Endothelial cell of umbilical vein (primary cell): ENCODE measurements at regions of chr7 and their contacts with region 1.

Region 1: GRCh38 chr7:70953331-70953741 is 178.6 kb upstream of the GALNT17 start:
- DNase-seq: no peak
- H3K4me3 ChIP-seq: no peak overlapping the region
- H3K27ac ChIP-seq: no peak overlapping the region
- H3K4me1 ChIP-seq: no peaks in the 10 kb centered on the region
- H3K27me3 ChIP-seq: no peaks in the 10 kb centered on the region
- CTCF ChIP-seq: no peak
- POLR2A ChIP-seq: no peak

Region 2: DNA sequence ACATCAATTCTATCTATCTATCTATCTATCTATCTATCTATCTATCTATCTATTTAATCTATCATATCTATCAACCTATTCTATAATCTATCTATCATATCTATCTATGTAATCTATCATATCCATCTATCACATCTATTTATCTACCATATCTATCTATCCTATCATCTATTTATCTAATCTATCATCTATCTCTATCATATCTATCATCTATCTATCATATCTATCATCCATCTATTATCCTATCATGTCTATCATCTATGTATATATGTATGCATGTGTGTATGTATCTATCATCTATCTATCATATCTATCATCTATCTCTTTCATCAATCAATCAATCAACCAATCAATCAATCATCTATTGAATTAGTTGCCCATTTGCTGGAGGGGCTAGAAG is 19.4 kb after region 1 on chr7:
- CTCF ChIA-PET with region 1: interaction called, 11 read pairs
- POLR2A ChIA-PET with region 1: interaction called, 6 read pairs
- dilution Hi-C with region 1: no loop called
- intact Hi-C with region 1: no loop called
- DNase-seq: no peak
- H3K4me3 ChIP-seq: no peak overlapping the region
- H3K27ac ChIP-seq: no peak overlapping the region
- H3K4me1 ChIP-seq: no peaks in the 10 kb centered on the region
- H3K27me3 ChIP-seq: no peaks in the 10 kb centered on the region
- CTCF ChIP-seq: no peak
- POLR2A ChIP-seq: no peak

Region 3: GRCh38 chr7:71594746-71595145 is 641.4 kb after region 1 on chr7:
- CTCF ChIA-PET with region 1: no interaction called
- POLR2A ChIA-PET with region 1: no interaction called
- dilution Hi-C with region 1: no loop called
- intact Hi-C with region 1: no loop called
- DNase-seq: no peak
- H3K4me3 ChIP-seq: no peak overlapping the region
- H3K27ac ChIP-seq: no peak overlapping the region
- H3K4me1 ChIP-seq: no peaks in the 10 kb centered on the region
- H3K27me3 ChIP-seq: no peaks in the 10 kb centered on the region
- CTCF ChIP-seq: no peak
- POLR2A ChIP-seq: no peak